Mammary epithelial cell (primary cell): ENCODE measurements at regions of chr22 and their contacts with region 1.

Region 1: DNA sequence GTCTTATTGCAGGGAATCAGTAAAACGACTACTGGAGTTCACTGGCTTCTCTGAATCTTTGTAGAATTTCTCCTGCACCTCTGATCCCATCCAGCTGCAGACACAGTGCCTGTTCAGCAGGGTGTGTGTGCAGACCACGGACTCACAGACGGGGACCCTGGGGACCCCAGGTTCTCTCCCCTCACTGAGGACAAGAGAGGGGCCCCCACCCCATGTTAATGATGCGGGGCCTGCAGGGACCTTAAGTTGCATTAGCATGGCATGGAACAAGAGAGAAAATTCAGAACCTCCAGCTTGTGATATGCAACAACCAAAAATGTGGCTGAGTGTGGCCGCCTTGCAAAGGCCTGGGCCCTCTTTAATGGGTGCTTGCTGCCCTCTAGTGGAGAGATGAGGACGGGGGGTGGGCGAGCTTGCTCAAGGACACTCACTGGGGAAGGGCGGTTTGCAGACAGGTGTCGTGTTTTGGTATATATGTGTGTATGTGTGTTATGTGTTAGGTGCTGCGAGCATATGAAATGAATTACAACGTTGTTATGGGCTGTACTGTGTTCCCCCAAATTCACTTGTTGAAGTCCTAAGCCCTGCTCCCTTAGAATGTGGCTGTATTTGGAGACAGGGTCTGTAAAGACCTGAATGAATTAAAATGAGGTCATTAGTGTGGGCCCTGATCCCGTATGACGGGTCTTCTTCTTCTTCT is 84.4 kb upstream of the SEPTIN5 start:
- DNase-seq: peak; percentile 38
- H3K4me3 ChIP-seq: no peak overlapping the region
- H3K27ac ChIP-seq: no peak overlapping the region
- H3K4me1 ChIP-seq: peaks cover 12% of the 10 kb centered on the region
- H3K27me3 ChIP-seq: no peaks in the 10 kb centered on the region
- CTCF ChIP-seq: peak; percentile 92 to 96

Region 2: DNA sequence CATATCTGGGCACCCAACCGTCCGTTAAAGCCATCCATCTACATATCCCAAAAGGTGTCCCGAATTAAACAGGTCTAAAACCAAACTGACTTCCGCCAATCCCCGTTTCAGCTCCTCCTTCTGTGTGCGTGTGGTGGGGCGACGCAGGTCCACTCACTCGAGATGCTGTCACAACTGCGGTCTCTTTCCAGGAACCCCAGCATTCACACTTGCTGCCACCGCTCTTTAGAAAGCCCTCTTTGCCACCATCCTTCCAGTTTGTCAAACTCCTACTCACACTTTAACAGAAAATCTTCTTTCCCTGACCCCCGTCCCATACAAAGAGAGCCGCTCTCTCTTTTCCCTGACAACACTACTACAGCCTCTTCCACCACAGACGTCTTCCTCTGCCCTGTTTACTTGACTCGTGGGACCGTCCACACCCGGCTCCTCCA is 485.9 kb before region 1 on chr22:
- CTCF ChIA-PET with region 1: no interaction called
- dilution Hi-C with region 1: no loop called
- in situ Hi-C with region 1: no loop called
- intact Hi-C with region 1: loop called (anchors 10 kb)
- DNase-seq: peak; percentile 24
- H3K4me3 ChIP-seq: peak overlapping the region; percentile 77 to 100 (median 87)
- H3K27ac ChIP-seq: peak overlapping the region; percentile 75
- H3K4me1 ChIP-seq: peaks cover 7% of the 10 kb centered on the region
- H3K27me3 ChIP-seq: peaks cover 10% of the 10 kb centered on the region
- CTCF ChIP-seq: no peak

Region 3: DNA sequence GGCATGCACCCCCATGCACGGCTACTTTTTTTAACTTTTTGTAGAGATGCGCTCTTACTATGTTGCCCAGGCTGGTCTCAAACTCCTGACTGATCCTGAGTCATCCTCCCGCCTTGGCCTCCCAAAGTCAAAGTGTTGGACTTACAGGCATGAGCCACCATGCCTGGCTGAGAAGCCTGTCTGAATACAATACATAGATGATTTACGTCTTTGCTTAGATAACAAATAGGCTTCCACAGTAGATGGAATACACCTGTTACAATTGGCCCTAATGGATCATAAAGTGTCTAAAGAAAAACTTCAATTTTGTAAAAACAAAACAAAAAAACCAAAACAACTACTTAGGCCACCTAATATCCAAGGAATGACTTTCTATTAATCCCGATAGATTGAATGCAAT is 325.3 kb before region 1 on chr22:
- CTCF ChIA-PET with region 1: no interaction called
- dilution Hi-C with region 1: no loop called
- in situ Hi-C with region 1: loop called in 1 of 2 experiments (anchors 10 kb)
- intact Hi-C with region 1: loop called (anchors 2 kb)
- DNase-seq: no peak
- H3K4me3 ChIP-seq: no peak overlapping the region
- H3K27ac ChIP-seq: no peak overlapping the region
- H3K4me1 ChIP-seq: no peaks in the 10 kb centered on the region
- H3K27me3 ChIP-seq: no peaks in the 10 kb centered on the region
- CTCF ChIP-seq: no peak

Region 4: DNA sequence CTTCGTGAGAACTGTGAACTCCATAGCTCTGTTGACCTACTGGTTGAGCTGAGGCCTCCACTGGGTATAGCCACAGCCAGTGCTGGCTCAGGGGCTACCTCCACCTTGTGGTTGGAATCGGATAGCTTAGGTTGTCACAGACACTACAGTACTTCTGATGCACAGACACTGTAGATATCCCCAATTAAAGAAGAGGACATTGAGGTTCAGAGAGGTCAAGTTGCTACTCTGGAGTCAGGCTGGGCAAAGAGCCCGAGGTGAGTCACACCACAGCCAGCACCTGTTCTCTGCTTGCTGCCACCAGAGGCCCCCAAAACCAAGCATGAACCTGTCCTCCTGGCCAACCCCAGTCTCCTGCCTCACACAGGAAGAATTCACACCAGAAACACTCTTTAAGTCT is 156.3 kb before region 1 on chr22:
- CTCF ChIA-PET with region 1: no interaction called
- dilution Hi-C with region 1: no loop called
- in situ Hi-C with region 1: no loop called
- intact Hi-C with region 1: loop called (anchors 1 kb)
- DNase-seq: no peak
- H3K4me3 ChIP-seq: no peak overlapping the region
- H3K27ac ChIP-seq: no peak overlapping the region
- H3K4me1 ChIP-seq: peaks cover 23% of the 10 kb centered on the region
- H3K27me3 ChIP-seq: no peaks in the 10 kb centered on the region
- CTCF ChIP-seq: peak; percentile 14 to 35

Region 5: DNA sequence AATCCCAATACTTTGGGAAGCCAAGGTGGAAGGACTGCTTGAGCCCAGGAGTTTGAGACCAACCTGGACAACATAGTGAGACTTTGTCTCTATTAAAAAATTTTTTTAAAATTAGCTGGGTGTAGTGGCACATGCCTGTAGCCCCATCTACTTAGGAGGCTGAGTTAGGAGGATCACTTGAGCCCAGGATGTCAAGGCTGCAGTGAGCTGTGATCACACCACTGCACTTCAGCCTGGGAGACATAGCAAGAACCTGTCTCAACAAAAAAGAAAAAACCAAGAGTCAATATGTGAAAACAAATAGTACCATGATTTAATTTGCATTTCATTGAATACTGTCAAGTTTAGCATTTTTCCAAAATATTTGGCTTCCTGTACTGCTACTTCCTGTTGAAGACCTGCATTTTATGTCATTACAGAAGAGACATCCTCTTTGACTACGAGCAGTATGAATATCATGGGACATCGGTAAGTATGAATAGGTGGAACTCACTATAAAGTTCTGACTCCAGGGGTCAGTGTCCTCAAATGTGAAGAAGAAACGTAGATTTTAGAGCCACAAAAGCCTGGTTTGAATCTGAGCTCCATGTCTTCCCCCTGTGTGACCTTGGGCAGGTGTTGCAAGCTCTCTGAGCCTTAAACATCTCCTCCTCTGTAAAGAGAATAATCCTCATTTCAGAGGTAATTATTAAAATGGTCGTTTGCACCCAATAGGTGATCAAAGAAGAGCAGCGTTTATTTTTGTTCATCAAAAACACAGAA is 134.1 kb before region 1 on chr22:
- CTCF ChIA-PET with region 1: interaction called, 7 read pairs
- dilution Hi-C with region 1: no loop called
- in situ Hi-C with region 1: loop called in 1 of 2 experiments (anchors 10 kb)
- intact Hi-C with region 1: loop called (anchors 1 kb)
- DNase-seq: no peak
- H3K4me3 ChIP-seq: no peak overlapping the region
- H3K27ac ChIP-seq: no peak overlapping the region
- H3K4me1 ChIP-seq: peaks cover 10% of the 10 kb centered on the region
- H3K27me3 ChIP-seq: no peaks in the 10 kb centered on the region
- CTCF ChIP-seq: peak in 1 of 2 donors; percentile 35

Region 6: GRCh38 chr22:19514831-19515565 is 114.9 kb before region 1 on chr22:
- CTCF ChIA-PET with region 1: no interaction called
- dilution Hi-C with region 1: no loop called
- in situ Hi-C with region 1: no loop called
- intact Hi-C with region 1: loop called (anchors 5 kb)
- DNase-seq: peak; percentile 18
- H3K4me3 ChIP-seq: no peak overlapping the region
- H3K27ac ChIP-seq: no peak overlapping the region
- H3K4me1 ChIP-seq: peaks cover 18% of the 10 kb centered on the region
- H3K27me3 ChIP-seq: no peaks in the 10 kb centered on the region
- CTCF ChIP-seq: no peak

Region 7: GRCh38 chr22:19705181-19705934 is 75.5 kb after region 1 on chr22:
- CTCF ChIA-PET with region 1: no interaction called
- dilution Hi-C with region 1: no loop called
- in situ Hi-C with region 1: loop called in 1 of 2 experiments (anchors 10 kb)
- intact Hi-C with region 1: no loop called
- DNase-seq: no peak
- H3K4me3 ChIP-seq: no peak overlapping the region
- H3K27ac ChIP-seq: no peak overlapping the region
- H3K4me1 ChIP-seq: no peaks in the 10 kb centered on the region
- H3K27me3 ChIP-seq: no peaks in the 10 kb centered on the region
- CTCF ChIP-seq: no peak